A549 (cell line): ENCODE measurements at regions of chr16 and their contacts with region 1.

Region 1: DNA sequence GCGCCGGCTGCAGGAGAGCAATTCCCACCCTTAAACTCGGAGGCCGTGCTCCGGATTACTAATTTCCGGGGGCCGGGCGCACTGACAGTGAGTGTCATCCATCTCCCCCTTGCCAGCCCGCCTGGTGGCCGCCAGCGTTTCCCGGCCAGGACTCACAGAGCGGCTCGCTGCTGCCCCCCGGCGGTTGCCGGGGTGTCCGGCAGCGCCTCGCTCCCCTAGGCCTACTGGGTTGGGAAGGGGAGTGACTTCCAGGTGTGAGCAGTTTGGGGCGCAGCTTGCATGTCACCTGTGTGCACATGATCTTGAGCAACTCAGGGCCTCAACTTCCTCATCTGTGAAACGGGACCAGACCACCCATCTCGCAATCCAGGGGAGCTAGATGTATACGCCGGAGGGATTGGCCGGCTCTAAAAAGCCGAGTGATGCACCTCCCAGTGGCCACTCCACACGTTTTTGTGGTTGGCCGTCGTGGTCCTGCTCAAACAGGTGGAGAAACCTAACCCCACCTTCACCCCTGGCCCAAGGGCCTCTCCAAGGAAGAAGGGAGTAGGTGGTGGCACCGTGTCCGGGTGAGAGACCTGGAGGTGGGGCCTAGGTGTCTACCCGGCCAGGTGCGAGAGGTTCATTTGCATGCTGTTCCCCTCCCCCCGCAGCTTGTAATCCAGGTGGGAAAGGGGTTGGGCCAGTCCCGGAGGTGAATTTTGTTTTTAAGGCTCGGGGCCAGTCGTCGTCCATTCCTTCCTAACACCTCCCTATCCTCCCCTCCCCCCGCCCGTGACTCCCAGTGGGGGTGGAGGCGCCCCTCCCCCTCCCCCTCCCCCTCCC is 2.4 kb upstream of the GSE1 start:
- DNase-seq: peak; percentile 84 to 85
- ATAC-seq: peak; percentile 32 to 63
- H3K4me3 ChIP-seq: peak overlapping the region; percentile 96
- H3K27ac ChIP-seq: peak overlapping the region; percentile 98 to 99
- H3K4me1 ChIP-seq: peaks cover 22% of the 10 kb centered on the region
- CTCF ChIP-seq: peak; percentile 99
- EP300 ChIP-seq: no peak
- POLR2A ChIP-seq: no peak
- RAD21 ChIP-seq: peak; percentile 89 to 98

Region 2: DNA sequence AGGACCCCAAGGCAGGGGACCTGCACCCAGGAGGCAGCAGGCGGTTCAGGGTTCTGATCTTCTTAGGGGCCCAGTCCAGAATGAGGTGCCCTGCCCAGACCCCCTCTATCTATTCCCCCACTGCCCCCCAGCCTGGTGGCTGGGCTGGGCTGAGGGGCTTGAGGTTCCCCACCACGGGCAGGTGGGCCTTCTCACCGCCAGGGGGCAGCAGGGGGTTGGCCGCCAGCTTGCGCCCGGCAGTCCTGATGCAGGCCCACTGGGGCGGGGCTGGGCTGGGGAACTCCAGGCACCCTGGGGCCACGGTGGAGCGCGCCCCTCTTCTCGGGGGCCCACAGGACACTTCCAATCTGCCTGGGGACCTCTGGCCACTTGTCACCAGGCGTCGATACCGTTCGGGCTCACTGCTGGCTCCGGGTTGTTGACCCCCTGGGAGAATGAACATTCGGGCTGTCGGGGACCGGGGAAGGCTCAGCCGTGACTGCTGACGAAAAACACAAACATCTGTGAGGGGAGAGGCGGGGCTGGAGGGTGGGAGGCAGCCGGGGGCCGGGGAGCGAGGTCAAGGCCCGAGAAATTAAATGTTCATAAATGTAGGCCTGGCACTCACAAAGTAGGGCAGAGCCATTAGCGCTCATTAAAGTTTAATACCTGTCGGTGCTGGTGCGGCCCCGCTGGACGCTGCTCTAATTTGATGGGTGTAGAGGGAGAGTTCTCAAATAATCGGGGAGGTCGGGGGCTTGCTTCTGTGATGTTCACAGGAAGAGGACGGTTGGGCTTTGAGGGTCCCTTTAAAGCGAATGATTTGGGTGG is 216.8 kb before region 1 on chr16:
- CTCF ChIA-PET with region 1: interaction called, 36 read pairs
- POLR2A ChIA-PET with region 1: interaction called, 5 read pairs
- DNase-seq: peak; percentile 65 to 84
- ATAC-seq: peak; percentile 40 to 69; a peak in 3 of 6 replicates
- H3K4me3 ChIP-seq: no peak overlapping the region
- H3K27ac ChIP-seq: peak overlapping the region in 1 of 2 experiments; percentile 86; a peak in 4 of 6 replicates
- H3K4me1 ChIP-seq: peaks cover 67% of the 10 kb centered on the region
- CTCF ChIP-seq: peak; percentile 84
- EP300 ChIP-seq: no peak
- POLR2A ChIP-seq: no peak
- RAD21 ChIP-seq: peak; percentile 58 to 69

Region 3: DNA sequence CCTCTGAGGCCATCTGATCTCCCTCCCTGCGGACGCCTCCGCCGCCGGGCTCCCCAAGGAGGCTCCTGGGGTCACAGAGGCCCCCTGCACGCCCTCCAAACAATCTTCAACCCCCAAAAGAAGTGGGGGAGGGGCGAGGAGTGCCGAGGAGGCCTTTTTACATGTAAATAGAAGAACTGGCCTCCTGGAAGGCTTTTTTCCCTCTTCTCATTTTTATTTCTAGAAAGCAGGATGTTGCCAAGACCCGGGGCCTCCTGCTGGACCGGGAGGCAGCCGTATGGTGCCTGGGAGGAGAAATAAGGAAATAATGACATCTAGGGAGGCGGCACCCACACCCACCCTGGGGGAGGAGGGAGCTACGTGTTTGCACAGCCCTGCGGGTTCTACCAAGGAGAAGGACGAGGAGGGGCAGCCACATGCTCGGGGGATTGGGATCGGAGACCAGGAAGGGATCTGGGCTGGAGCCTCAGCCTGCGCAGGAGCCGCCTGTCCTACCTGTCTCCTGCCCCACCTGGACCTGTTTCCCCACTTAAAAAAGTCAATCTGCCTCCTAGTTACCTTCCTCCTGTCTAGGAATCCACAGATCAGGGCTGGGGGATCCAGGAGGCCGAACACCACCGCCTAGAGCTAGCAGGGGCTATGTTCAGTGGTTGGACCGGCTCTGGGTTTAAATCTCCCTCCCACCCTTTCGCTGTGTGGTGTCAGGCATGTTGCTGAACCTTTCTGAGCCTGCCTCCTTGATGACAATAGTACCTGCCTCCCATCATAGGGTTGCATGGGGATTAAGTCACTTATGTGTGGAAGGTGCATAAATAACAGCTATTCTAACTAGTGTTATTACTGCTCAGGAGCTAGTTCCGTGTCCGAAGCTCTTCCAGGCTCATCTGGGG is 173.3 kb before region 1 on chr16:
- CTCF ChIA-PET with region 1: interaction called, 19 read pairs
- POLR2A ChIA-PET with region 1: no interaction called
- DNase-seq: no peak
- ATAC-seq: no peak
- H3K4me3 ChIP-seq: no peak overlapping the region
- H3K27ac ChIP-seq: no peak overlapping the region
- H3K4me1 ChIP-seq: 0 out of 3 replicates have a peak, but pooled peaks cover 3% of the 10 kb centered on the region
- CTCF ChIP-seq: no peak
- EP300 ChIP-seq: no peak
- POLR2A ChIP-seq: no peak
- RAD21 ChIP-seq: no peak

Region 4: DNA sequence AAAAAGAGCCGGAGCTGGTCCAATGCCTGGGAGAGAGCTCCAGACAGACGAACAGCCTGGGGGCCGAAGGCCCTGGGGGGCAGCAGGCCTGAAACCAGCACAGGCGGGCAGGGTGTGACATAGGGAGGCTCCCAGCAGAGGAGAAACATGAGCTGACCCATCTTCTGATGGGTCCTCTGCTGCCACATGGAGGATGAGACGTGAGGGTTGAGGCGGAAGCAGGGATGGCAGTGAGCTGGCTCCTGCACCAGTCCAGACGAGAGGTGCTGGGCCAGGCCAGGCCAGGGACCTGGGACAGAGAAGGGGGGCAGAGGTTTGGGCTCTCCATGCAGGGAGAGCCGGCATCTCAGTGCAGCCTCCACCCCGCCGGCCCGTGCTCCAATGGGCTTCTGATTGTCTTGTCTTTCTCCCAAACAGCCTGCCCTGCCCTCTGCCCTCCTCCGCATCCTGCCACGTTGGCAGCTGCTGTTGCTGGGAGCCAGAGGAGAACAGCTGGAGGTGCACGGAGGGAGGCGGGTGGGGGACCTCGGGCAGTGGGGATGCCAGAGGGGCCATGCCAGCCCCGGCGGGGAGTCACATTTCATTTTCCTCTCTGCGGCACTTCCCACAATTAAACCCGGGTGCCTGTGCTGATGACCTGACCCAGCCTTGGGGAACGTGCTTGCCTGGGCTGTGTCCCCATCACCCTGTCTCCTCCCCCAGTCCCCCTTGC is 136.7 kb before region 1 on chr16:
- CTCF ChIA-PET with region 1: interaction called, 55 read pairs
- POLR2A ChIA-PET with region 1: no interaction called
- DNase-seq: no peak
- ATAC-seq: peak; percentile 57 to 75
- H3K4me3 ChIP-seq: no peak overlapping the region
- H3K27ac ChIP-seq: no peak overlapping the region
- H3K4me1 ChIP-seq: no peaks in the 10 kb centered on the region
- CTCF ChIP-seq: no peak
- EP300 ChIP-seq: no peak
- POLR2A ChIP-seq: no peak
- RAD21 ChIP-seq: no peak

Region 5: GRCh38 chr16:85514595-85515318 is 96.0 kb before region 1 on chr16:
- CTCF ChIA-PET with region 1: interaction called, 11 read pairs
- POLR2A ChIA-PET with region 1: interaction called, 25 read pairs
- DNase-seq: peak; percentile 92 to 95
- ATAC-seq: peak; percentile 85 to 89
- H3K4me3 ChIP-seq: peak overlapping the region; percentile 24; the same call in 2 of the 3 replicates
- H3K27ac ChIP-seq: peak overlapping the region; percentile 95 to 97
- H3K4me1 ChIP-seq: peaks cover 36% of the 10 kb centered on the region
- CTCF ChIP-seq: no peak
- EP300 ChIP-seq: peak; percentile 28 to 78; a peak in 2 of 5 replicates
- POLR2A ChIP-seq: 0 out of 2 replicates have a peak, but pooled peaks have one; percentile 14
- RAD21 ChIP-seq: peak in 1 of 2 experiments; percentile 45; a peak in 2 of 5 replicates

Region 6: GRCh38 chr16:85574672-85575475 is 35.8 kb before region 1 on chr16:
- CTCF ChIA-PET with region 1: interaction called, 10 read pairs
- POLR2A ChIA-PET with region 1: interaction called, 3 read pairs
- DNase-seq: no peak
- ATAC-seq: no peak
- H3K4me3 ChIP-seq: no peak overlapping the region
- H3K27ac ChIP-seq: no peak overlapping the region
- H3K4me1 ChIP-seq: no peaks in the 10 kb centered on the region
- CTCF ChIP-seq: no peak
- EP300 ChIP-seq: no peak
- POLR2A ChIP-seq: no peak
- RAD21 ChIP-seq: no peak